Gastrocnemius medialis (tissue), 4 donors: ENCODE measurements at regions of chr7 and their contacts with region 1.

Region 1: GRCh38 chr7:23531794-23532489 is at the start of gene TRA2A:
- DNase-seq: peak; percentile 95 to 96
- ATAC-seq: peak; percentile 97
- H3K4me3 ChIP-seq: peak within 1 kb of the TSS; percentile 79 to 95 (median 90)
- H3K27ac ChIP-seq: peak within 1 kb of the TSS; percentile 95 to 97 (median 97)
- H3K4me1 ChIP-seq: peaks cover 35 to 36% of the 10 kb centered on the region in 2 donors
- H3K27me3 ChIP-seq: no peaks in the 10 kb centered on the region
- CTCF ChIP-seq: peak in 1 of 5 experiments; percentile 20
- POLR2A ChIP-seq: peak; percentile 92 to 97
- total RNA-seq, gene TRA2A: 4.8 to 6.4 (median 5.7) TPM

Region 2: GRCh38 chr7:23474094-23474828 is 57.7 kb before region 1 on chr7:
- in situ Hi-C with region 1: no loop called
- intact Hi-C with region 1: loop called (anchors 5 kb)
- DNase-seq: peak; percentile 35 to 40
- ATAC-seq: peak in 1 of 2 donors; percentile 66
- H3K4me3 ChIP-seq: peak overlapping the region; percentile 7 to 41 (median 37)
- H3K27ac ChIP-seq: no peak overlapping the region
- H3K4me1 ChIP-seq: peaks cover 16 to 26% of the 10 kb centered on the region in 2 donors
- H3K27me3 ChIP-seq: peaks cover 96 to 100% (median 100%) of the 10 kb centered on the region in 3 donors
- CTCF ChIP-seq: no peak
- POLR2A ChIP-seq: no peak

Region 3: DNA sequence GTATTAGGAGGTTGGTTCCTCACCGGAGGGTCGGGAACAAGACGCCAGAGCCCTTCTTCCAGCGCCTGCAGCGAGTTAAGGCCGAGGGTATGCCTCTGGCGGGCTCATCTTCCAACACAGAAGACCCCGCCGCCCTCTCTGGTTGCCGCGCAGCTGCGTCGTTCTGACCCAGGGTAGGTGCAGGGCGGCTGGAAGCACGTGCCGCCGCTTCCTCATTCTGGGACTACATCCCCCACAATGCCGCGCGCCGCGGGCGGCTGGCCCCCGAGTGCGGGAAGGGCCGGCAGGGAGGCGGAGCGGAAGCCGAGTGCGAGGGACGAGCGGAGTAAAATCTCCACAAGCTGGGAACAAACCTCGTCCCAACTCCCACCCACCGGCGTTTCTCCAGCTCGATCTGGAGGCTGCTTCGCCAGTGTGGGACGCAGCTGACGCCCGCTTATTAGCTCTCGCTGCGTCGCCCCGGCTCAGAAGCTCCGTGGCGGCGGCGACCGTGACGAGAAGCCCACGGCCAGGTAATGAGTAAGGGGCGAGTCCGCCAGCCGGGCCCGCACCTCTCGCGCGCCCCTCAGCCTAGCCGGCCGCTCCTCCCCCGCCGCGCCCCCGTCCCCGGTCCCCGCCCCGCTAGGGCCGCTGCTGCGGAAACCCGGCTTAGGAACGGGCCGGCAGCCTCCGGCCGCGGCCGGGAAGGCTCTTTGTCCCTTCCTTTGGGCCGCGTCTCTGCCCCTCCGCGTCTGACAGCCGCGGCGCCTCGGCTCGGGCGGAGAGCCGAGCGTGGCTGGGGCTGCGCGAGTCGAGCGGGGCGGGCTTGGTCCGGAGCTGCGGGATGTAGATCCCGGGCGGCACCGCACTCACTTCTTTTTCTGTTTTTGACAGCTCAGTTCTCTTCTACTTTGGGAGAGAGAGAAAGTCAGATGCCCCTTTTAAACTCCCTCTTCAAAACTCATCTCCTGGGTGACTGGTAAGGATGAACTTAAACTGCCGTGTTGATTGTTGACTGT is 65.5 kb after region 1 on chr7 and contains the start of gene CCDC126:
- in situ Hi-C with region 1: no loop called
- intact Hi-C with region 1: loop called (anchors 2 kb)
- DNase-seq: peak; percentile 86 to 87
- ATAC-seq: peak; percentile 97 to 98
- H3K4me3 ChIP-seq: peak within 1 kb of the TSS; percentile 69 to 90 (median 74)
- H3K27ac ChIP-seq: peak within 1 kb of the TSS; percentile 91 to 97 (median 96)
- H3K4me1 ChIP-seq: peaks cover 20 to 33% of the 10 kb centered on the region in 2 donors
- H3K27me3 ChIP-seq: no peaks in the 10 kb centered on the region
- CTCF ChIP-seq: no peak
- POLR2A ChIP-seq: peak; percentile 61 to 81
- total RNA-seq, gene CCDC126: 12.0 to 23.1 (median 20.2) TPM